B cell (primary cell): ENCODE measurements at regions of chr6 and their contacts with region 1.

Region 1: GRCh38 chr6:130189531-130190397 is 33.0 kb downstream of the SAMD3 start:
- DNase-seq: no peak
- ATAC-seq: no peak
- H3K4me3 ChIP-seq: no peak overlapping the region
- H3K4me3 Mint-ChIP-seq: no peak overlapping the region
- H3K27ac ChIP-seq: no peak overlapping the region
- H3K27ac Mint-ChIP-seq: no peak overlapping the region
- H3K4me1 ChIP-seq: peaks cover 10 to 12% of the 10 kb centered on the region in 2 donors
- H3K4me1 Mint-ChIP-seq: peaks cover 12% of the 10 kb centered on the region
- H3K27me3 ChIP-seq: no peaks in the 10 kb centered on the region
- H3K27me3 Mint-ChIP-seq: no peaks in the 10 kb centered on the region
- CTCF ChIP-seq: no peak

Region 2: GRCh38 chr6:130148181-130148580 is 41.6 kb before region 1 on chr6:
- CTCF ChIA-PET with region 1: no interaction called
- POLR2A ChIA-PET with region 1: no interaction called
- intact Hi-C with region 1: loop called (anchors 5 kb)
- DNase-seq: no peak
- ATAC-seq: no peak
- H3K4me3 ChIP-seq: no peak overlapping the region
- H3K4me3 Mint-ChIP-seq: no peak overlapping the region
- H3K27ac ChIP-seq: no peak overlapping the region
- H3K27ac Mint-ChIP-seq: no peak overlapping the region
- H3K4me1 ChIP-seq: no peaks in the 10 kb centered on the region
- H3K4me1 Mint-ChIP-seq: peaks cover 2% of the 10 kb centered on the region
- H3K27me3 ChIP-seq: no peaks in the 10 kb centered on the region
- H3K27me3 Mint-ChIP-seq: no peaks in the 10 kb centered on the region
- CTCF ChIP-seq: peak; percentile 31

Region 3: GRCh38 chr6:130215526-130215925 is 25.8 kb after region 1 on chr6:
- CTCF ChIA-PET with region 1: no interaction called
- POLR2A ChIA-PET with region 1: no interaction called
- intact Hi-C with region 1: no loop called
- DNase-seq: no peak
- ATAC-seq: no peak
- H3K4me3 ChIP-seq: no peak overlapping the region
- H3K4me3 Mint-ChIP-seq: no peak overlapping the region
- H3K27ac ChIP-seq: no peak overlapping the region
- H3K27ac Mint-ChIP-seq: no peak overlapping the region
- H3K4me1 ChIP-seq: peaks cover 3 to 6% of the 10 kb centered on the region in 2 donors
- H3K4me1 Mint-ChIP-seq: peaks cover 9% of the 10 kb centered on the region
- H3K27me3 ChIP-seq: no peaks in the 10 kb centered on the region
- H3K27me3 Mint-ChIP-seq: no peaks in the 10 kb centered on the region
- CTCF ChIP-seq: no peak